AG04449 (cell line): ENCODE measurements at regions of chr12 and their contacts with region 1.

Region 1: DNA sequence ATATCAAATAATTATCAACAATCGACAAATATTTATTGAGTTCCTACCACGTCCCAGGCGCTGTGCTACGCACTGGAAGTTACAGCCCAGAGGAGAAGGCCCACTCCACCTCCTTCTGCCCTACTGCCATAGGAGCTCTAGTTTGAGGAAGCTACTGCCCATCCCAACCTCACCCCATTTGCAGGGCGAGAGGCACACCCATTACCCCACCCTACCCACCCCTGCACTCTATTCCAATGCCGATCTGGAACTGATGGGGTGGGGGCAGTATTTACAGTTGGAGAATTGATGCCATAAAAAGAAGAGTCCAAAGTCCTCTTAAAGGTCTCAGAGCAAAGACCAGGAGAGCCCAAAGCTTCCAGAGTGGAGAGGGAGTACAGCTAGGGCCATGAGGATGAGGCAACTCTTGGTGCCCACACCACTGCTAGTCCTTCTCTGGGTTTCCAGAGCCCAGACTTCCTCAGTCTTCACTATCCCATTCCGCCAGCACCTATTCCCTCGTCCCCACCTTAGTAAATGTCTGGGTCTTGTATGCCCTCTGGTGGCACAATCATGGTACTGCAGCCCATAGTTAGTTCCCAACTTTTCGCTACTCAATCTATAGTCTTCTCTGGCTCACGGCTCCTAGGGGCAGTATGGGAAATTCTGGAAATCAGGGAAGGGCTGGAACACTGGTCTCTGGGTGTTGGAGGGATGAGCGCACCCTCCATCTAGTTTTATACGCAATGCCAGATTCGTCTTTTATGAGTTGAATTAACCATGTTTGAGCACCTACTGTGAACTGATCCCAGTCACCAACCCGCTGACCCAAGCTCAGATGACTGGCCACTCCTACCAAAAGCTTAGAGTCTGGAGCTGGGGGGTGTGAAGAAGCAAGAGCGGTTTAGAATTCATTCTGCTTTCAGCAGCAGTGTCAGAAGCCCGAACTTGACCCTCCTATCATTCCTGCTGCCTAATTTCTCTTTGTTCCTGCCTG is 6.9 kb upstream of the ADCY6 start:
- DNase-seq: no peak
- H3K4me3 ChIP-seq: no peak overlapping the region
- CTCF ChIP-seq: peak; percentile 81

Region 2: DNA sequence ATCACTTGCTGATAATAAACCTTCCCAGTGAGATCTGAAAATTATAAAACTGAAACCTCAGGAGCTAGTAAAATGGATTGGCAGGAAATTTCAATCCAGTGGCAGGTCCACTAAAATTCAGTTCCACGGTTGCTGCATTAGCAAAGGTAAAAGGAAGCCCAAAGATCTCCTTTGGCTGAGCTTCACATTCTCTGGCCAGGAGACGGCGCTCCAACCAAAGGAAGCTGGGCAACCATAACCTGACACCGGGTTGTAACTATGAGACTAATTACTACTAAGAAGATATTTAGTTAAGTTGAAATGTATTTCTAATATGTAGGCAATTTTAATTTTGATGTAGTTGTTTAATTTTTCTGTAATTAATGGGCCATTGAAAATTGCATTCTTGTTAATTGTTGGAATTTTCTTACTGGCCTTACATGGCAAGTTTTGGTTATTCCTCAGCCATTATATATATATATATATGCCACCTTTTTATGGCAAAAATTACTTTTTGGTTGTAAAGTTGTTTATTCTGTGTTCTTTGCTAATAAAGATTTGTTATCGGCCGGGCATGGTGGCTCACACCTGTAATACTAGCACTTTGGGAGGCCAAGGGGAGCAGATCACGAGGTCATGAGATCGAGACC is 253.4 kb before region 1 on chr12:
- CTCF ChIA-PET with region 1: interaction called, 11 read pairs
- POLR2A ChIA-PET with region 1: interaction called, 5 read pairs
- DNase-seq: no peak
- H3K4me3 ChIP-seq: no peak overlapping the region
- CTCF ChIP-seq: peak; percentile 56

Region 3: DNA sequence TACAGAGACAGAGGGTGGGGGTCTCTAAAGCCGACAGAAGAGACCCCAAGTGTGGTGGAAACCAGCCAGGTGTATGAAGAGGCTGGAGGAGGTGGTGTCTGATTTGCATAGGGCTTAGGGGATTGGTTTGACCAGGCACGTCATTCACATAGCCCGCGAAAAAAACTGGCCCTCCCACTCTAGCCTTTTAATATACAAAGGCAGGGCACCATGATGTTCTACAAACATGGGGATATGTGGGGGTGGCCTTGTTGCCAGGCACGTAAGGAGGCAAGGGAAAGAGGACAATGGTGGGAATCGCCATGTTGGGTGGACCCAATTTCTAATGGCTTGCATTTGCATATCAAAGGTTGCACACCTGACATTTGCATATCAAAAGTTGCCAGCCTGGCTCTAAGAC is 239.1 kb before region 1 on chr12:
- CTCF ChIA-PET with region 1: no interaction called
- POLR2A ChIA-PET with region 1: no interaction called
- DNase-seq: no peak
- H3K4me3 ChIP-seq: no peak overlapping the region
- CTCF ChIP-seq: no peak

Region 4: DNA sequence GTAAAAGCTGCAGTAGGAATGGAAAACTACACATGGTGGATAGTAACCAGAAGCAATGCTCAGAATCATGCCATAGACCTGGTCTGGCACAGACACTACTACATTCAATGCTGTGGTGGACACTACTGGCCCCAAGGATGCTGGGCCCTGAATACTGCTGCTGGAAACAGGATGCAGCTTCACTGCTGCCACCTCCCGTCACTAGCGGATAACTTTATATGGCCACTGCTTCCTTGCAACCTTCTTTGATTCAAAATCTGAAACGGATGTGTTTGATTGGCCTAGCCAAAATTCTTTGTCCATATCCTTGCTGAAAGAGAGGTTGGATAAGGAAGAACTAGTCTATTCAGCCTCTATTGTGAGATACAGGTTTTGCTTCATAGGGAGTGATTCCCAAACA is 37.5 kb before region 1 on chr12:
- CTCF ChIA-PET with region 1: interaction called, 601 read pairs
- POLR2A ChIA-PET with region 1: interaction called, 3 read pairs
- DNase-seq: no peak
- H3K4me3 ChIP-seq: no peak overlapping the region
- CTCF ChIP-seq: no peak

Region 5: GRCh38 chr12:48765753-48766162 is 30.0 kb before region 1 on chr12:
- CTCF ChIA-PET with region 1: interaction called, 601 read pairs
- POLR2A ChIA-PET with region 1: no interaction called
- DNase-seq: no peak
- H3K4me3 ChIP-seq: no peak overlapping the region
- CTCF ChIP-seq: no peak

Region 6: GRCh38 chr12:48774516-48774915 is 21.3 kb before region 1 on chr12:
- CTCF ChIA-PET with region 1: interaction called, 25 read pairs
- POLR2A ChIA-PET with region 1: no interaction called
- DNase-seq: no peak
- H3K4me3 ChIP-seq: no peak overlapping the region
- CTCF ChIP-seq: no peak

Region 7: GRCh38 chr12:48779869-48780268 is 15.9 kb before region 1 on chr12:
- CTCF ChIA-PET with region 1: interaction called, 41 read pairs
- POLR2A ChIA-PET with region 1: no interaction called
- DNase-seq: peak; percentile 45
- H3K4me3 ChIP-seq: no peak overlapping the region; the same call in 1 of the 2 replicates
- CTCF ChIP-seq: no peak

Region 8: DNA sequence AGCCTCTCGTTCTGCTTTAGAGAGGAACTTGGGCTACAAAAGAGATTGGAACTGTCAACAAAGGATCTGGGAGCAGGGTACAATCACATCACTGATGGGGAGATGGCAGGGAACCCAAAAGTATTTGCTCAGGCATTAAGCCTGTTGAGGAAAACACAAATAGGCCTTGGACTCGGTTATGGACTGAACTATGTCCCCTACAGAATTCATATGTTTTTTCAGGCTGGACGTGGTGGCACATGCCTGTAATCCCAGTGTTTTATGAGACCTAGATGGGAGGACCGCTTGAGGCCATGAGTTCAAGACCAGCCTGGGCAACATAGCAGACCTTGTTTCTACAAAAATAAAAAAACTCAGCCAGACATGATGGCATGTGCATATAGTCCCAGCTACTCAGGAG is 42.3 kb after region 1 on chr12:
- CTCF ChIA-PET with region 1: no interaction called
- POLR2A ChIA-PET with region 1: no interaction called
- DNase-seq: no peak
- H3K4me3 ChIP-seq: no peak overlapping the region
- CTCF ChIP-seq: no peak

Region 9: GRCh38 chr12:48917857-48918537 is 122.2 kb after region 1 on chr12:
- CTCF ChIA-PET with region 1: no interaction called
- POLR2A ChIA-PET with region 1: no interaction called
- DNase-seq: no peak
- H3K4me3 ChIP-seq: no peak overlapping the region
- CTCF ChIP-seq: no peak